Dendritic cell treated with granulocyte-macrophage colony-stimulating factor and Interleukin-4, amounts not matched to agents 40 ng/mL and 50 ng/mL, for 4 days (primary cell): ENCODE measurements at regions of chr2 and their contacts with region 1.

Region 1: DNA sequence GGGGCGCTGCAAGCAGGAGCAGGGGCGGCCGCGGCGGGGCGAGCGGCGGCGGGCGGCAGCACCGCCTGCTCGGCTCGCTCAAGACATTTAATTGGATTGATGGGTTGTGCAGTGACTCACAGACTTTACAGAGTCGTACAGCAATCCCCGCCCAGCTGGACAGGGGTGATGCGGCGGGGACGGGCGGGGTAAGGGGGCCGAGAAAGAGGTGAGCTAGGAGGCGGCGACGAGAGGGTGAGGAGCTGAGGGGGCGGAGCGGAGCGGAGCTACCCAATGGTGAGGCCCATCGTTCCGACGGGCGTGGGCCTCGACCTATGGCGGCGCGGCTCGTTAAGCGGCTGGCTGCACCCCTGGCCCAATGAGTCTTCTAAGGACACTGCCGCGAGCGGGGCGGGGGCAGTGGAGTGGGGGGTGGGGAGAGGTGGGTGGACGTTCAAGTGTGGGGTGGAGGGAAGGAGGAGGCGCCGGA is 97.1 kb upstream of the SERTAD2 start:
- H3K4me3 Mint-ChIP-seq: peak overlapping the region; percentile 97
- H3K27ac Mint-ChIP-seq: peak overlapping the region; percentile 99
- H3K4me1 Mint-ChIP-seq: peaks cover 30% of the 10 kb centered on the region
- H3K27me3 Mint-ChIP-seq: no peaks in the 10 kb centered on the region

Region 2: DNA sequence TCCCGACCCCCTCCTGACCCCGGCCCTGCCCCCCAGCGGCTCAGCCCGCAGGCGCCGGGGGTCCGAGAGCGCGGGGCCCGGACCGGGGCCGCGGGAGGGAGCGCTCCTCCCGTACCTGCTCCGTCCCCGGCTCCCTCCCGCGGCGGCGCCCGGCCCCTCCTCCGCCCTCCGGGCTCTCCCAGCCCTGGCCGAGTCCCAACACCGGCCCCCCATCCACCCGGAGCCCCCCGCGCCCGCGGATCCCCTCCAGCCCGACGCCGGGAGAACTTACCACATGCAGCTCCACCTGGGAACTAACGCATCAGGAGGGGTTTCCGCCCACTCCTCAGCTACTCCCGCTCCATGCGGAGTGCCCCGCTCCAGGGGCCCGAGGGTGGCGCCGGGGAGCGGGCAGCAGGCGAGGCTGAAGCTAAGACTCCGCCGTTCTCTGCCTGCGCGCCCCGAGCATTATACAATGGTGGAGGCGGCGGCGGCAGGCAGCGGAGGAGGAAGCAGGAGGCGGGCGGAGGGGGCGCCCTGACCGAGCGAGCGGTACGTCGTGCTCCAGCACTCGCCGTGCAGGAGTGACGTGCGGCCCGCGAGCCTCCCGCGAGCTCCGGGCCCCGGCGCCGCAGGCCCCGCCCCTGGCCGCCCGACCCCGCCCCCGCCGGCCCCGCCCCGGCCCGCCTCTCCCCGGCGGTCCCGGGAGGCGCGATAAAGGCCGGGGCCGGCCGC is 97.3 kb before region 1 on chr2 and contains the start of gene SERTAD2:
- intact Hi-C with region 1: loop called (anchors 1 kb)
- H3K4me3 Mint-ChIP-seq: peak within 1 kb of the TSS; percentile 89
- H3K27ac Mint-ChIP-seq: peak within 1 kb of the TSS; percentile 95
- H3K4me1 Mint-ChIP-seq: peaks cover 63% of the 10 kb centered on the region
- H3K27me3 Mint-ChIP-seq: no peaks in the 10 kb centered on the region

Region 3: GRCh38 chr2:64730551-64731262 is 20.1 kb before region 1 on chr2:
- intact Hi-C with region 1: loop called (anchors 2 kb)
- H3K4me3 Mint-ChIP-seq: peak overlapping the region; percentile 63
- H3K27ac Mint-ChIP-seq: peak overlapping the region; percentile 95
- H3K4me1 Mint-ChIP-seq: peaks cover 48% of the 10 kb centered on the region
- H3K27me3 Mint-ChIP-seq: no peaks in the 10 kb centered on the region

Region 4: GRCh38 chr2:64767670-64768468 is 17.0 kb after region 1 on chr2:
- intact Hi-C with region 1: loop called (anchors 1 kb)
- H3K4me3 Mint-ChIP-seq: peak overlapping the region; percentile 88
- H3K27ac Mint-ChIP-seq: peak overlapping the region; percentile 80
- H3K4me1 Mint-ChIP-seq: peaks cover 42% of the 10 kb centered on the region
- H3K27me3 Mint-ChIP-seq: peaks cover 2% of the 10 kb centered on the region

Region 5: DNA sequence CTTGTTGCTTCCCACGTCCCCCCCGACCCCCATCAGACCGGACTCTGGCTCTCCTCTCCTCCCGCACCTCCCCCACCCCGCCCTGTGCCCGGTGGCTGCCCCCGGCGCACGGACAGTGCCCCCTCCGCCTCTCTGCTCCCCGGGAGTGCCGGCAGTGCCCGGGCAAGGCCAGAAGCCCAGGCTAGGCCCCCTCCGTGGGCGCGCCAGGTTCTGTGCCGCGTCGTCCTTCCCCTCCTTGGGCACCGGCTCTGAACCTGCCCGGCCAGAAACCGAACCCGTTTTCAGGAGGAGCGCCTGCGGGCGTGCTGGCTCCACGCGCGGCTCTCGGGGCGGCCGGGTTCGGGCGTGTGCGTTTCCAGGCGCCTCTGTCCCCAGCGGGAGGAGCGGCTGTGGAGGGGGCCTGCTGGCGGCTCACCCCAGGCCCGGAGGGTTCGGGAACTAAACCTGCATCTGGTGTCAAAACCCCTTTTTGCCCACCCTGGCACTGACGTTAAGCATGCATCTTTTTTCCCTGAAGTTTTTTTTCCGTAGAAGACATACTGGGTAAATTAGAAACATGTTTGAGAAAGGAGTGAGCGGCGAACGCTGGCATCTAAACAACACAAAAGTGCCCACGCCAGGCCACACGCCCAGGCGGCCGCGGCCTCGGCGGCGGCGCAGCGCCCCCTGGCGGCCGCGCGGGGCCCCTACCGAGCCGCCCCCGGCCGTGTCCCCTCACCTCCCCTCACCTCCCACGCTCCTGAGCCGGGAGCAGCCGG is 114.4 kb after region 1 on chr2:
- intact Hi-C with region 1: loop called (anchors 1 kb)
- H3K4me3 Mint-ChIP-seq: peak overlapping the region; percentile 68
- H3K27ac Mint-ChIP-seq: no peak overlapping the region
- H3K4me1 Mint-ChIP-seq: no peaks in the 10 kb centered on the region
- H3K27me3 Mint-ChIP-seq: peaks cover 3% of the 10 kb centered on the region